Activated CD8-positive, alpha-beta T cell treated with anti-CD3 and anti-CD28 coated beads, Interleukin-2, amount 10 ng/mL, durations not matched to agents 7 days and 5 days (primary cell): ENCODE measurements at regions of chr14 and their contacts with region 1.

Region 1: GRCh38 chr14:64503478-64504309 is at the start of gene ZBTB25:
- DNase-seq: peak; percentile 97
- ATAC-seq: peak; percentile 72
- H3K4me3 Mint-ChIP-seq: peak within 1 kb of the TSS; percentile 96
- H3K27ac Mint-ChIP-seq: peak within 1 kb of the TSS; percentile 100
- H3K4me1 Mint-ChIP-seq: peaks cover 50% of the 10 kb centered on the region
- H3K27me3 Mint-ChIP-seq: no peaks in the 10 kb centered on the region
- total RNA-seq, gene ZBTB25: 26.2 to 28.2 TPM

Region 2: GRCh38 chr14:64387694-64388532 is 115.8 kb before region 1 on chr14 and contains the start of gene MTHFD1:
- CTCF ChIA-PET with region 1: interaction called, 5 read pairs
- POLR2A ChIA-PET with region 1: interaction called, 55 read pairs
- DNase-seq: peak; percentile 99
- ATAC-seq: peak; percentile 92
- H3K4me3 Mint-ChIP-seq: peak within 1 kb of the TSS; percentile 99
- H3K27ac Mint-ChIP-seq: peak within 1 kb of the TSS; percentile 94
- H3K4me1 Mint-ChIP-seq: peaks cover 45% of the 10 kb centered on the region
- H3K27me3 Mint-ChIP-seq: no peaks in the 10 kb centered on the region
- total RNA-seq, gene MTHFD1: 231 to 238 TPM

Region 3: DNA sequence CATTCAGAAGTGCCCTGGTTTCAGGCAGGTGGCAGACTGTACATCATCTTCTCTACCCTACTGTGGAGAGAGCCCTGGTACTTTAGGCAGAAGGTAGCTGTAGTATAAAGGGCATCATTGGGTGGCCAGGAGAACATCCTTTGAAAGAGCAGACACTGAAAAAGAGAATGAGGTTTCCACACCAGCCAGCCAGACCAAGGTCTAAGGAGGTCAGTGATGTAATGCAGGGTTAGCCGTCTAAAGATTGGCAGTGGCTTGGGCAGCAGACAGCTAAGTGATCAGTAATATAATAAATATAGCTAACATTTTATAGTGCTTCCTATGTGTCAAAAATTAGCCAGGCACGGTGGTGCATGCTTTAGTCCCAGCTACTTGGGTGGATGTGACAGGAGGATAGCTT is 12.1 kb before region 1 on chr14:
- CTCF ChIA-PET with region 1: interaction called, 6 read pairs
- POLR2A ChIA-PET with region 1: interaction called, 20 read pairs
- DNase-seq: no peak
- ATAC-seq: no peak
- H3K4me3 Mint-ChIP-seq: no peak overlapping the region
- H3K27ac Mint-ChIP-seq: peak overlapping the region; percentile 16
- H3K4me1 Mint-ChIP-seq: peaks cover 31% of the 10 kb centered on the region
- H3K27me3 Mint-ChIP-seq: no peaks in the 10 kb centered on the region

Region 4: GRCh38 chr14:64540208-64541157 is 36.8 kb after region 1 on chr14 and contains the start of gene HSPA2:
- CTCF ChIA-PET with region 1: interaction called, 6 read pairs
- POLR2A ChIA-PET with region 1: interaction called, 16 read pairs
- DNase-seq: peak; percentile 96
- ATAC-seq: peak; percentile 93
- H3K4me3 Mint-ChIP-seq: peak within 1 kb of the TSS; percentile 89
- H3K27ac Mint-ChIP-seq: peak within 1 kb of the TSS; percentile 92
- H3K4me1 Mint-ChIP-seq: peaks cover 33% of the 10 kb centered on the region
- H3K27me3 Mint-ChIP-seq: peaks cover 41% of the 10 kb centered on the region
- total RNA-seq, gene HSPA2: 1.7 to 2.2 TPM

Region 5: GRCh38 chr14:64556526-64556925 is 52.8 kb after region 1 on chr14:
- CTCF ChIA-PET with region 1: no interaction called
- POLR2A ChIA-PET with region 1: no interaction called
- DNase-seq: no peak
- ATAC-seq: no peak
- H3K4me3 Mint-ChIP-seq: no peak overlapping the region
- H3K27ac Mint-ChIP-seq: no peak overlapping the region
- H3K4me1 Mint-ChIP-seq: peaks cover 13% of the 10 kb centered on the region
- H3K27me3 Mint-ChIP-seq: peaks cover 24% of the 10 kb centered on the region